Endothelial cell of umbilical vein (primary cell): ENCODE measurements at regions of chr1 and their contacts with region 1.

Region 1: GRCh38 chr1:178749581-178750166 is 24.6 kb downstream of the RALGPS2 start:
- DNase-seq: no peak
- H3K4me3 ChIP-seq: no peak overlapping the region
- H3K27ac ChIP-seq: no peak overlapping the region
- H3K4me1 ChIP-seq: no peaks in the 10 kb centered on the region
- H3K27me3 ChIP-seq: no peaks in the 10 kb centered on the region
- CTCF ChIP-seq: no peak
- POLR2A ChIP-seq: no peak

Region 2: DNA sequence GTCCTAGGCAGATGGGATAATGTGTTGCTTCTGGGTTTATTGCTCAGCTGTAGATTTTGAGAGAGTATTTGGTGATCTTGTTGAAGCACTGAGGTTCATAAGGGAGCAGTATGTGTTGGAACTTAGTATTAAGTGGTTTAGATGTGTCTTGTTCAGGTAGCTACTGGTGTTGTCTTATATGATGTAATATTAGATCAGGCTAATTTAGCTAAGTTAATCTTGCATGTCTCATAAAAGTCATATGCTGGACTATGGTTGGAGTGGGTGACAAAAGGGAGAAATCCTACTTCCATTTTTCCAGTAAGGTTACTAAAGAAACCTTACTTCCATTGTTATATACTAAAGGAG is 449.3 kb before region 1 on chr1:
- CTCF ChIA-PET with region 1: interaction called, 10 read pairs
- POLR2A ChIA-PET with region 1: no interaction called
- dilution Hi-C with region 1: no loop called
- intact Hi-C with region 1: no loop called
- DNase-seq: no peak
- H3K4me3 ChIP-seq: no peak overlapping the region
- H3K27ac ChIP-seq: no peak overlapping the region
- H3K4me1 ChIP-seq: peaks cover 10% of the 10 kb centered on the region
- H3K27me3 ChIP-seq: no peaks in the 10 kb centered on the region
- CTCF ChIP-seq: no peak
- POLR2A ChIP-seq: no peak

Region 3: DNA sequence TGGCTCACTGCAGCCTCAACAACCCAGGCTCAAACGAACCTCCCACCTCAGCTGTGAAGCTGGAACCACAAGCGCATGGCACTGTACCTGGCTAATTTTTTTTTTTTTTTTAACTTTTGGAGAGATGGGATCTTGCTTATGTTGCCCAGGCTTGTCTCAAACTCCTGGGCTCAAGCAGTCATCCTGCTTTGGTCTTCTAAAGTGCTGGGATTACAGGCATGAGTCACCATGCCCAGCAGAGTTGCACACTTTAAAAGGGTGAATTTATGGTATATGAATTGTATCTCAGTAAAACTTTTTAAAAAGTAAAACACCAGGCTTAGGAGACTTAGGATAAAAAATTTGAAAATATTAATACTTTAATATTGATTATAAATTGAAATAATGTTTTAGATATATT is 352.0 kb before region 1 on chr1:
- CTCF ChIA-PET with region 1: no interaction called
- POLR2A ChIA-PET with region 1: no interaction called
- dilution Hi-C with region 1: no loop called
- intact Hi-C with region 1: no loop called
- DNase-seq: no peak
- H3K4me3 ChIP-seq: no peak overlapping the region
- H3K27ac ChIP-seq: no peak overlapping the region
- H3K4me1 ChIP-seq: no peaks in the 10 kb centered on the region
- H3K27me3 ChIP-seq: no peaks in the 10 kb centered on the region
- CTCF ChIP-seq: no peak
- POLR2A ChIP-seq: no peak

Region 4: DNA sequence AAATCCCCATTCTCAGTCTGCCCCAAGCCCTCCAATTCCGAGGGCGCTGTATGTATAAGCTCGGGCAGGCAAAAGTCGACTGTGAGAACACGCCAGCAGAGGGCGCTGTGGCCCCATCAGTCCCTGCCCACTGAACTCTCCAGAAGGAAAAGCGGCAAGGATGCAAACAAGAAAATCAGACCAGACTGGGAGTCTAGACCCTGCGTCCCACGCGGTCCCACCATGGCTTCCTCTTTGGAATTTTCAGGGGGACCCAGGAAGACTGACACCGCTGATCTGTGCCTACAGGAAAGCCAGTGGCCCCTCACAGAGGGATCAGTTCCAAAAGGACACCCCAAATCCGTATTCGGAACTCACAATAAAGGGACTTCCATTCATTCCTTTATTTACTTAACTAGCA is 217.3 kb before region 1 on chr1:
- CTCF ChIA-PET with region 1: interaction called, 60 read pairs
- POLR2A ChIA-PET with region 1: interaction called, 3 read pairs
- dilution Hi-C with region 1: no loop called
- intact Hi-C with region 1: loop called (anchors 2 kb)
- DNase-seq: peak; percentile 82
- H3K4me3 ChIP-seq: no peak overlapping the region
- H3K27ac ChIP-seq: no peak overlapping the region
- H3K4me1 ChIP-seq: no peaks in the 10 kb centered on the region
- H3K27me3 ChIP-seq: no peaks in the 10 kb centered on the region
- CTCF ChIP-seq: peak; percentile 87 to 89
- POLR2A ChIP-seq: no peak

Region 5: GRCh38 chr1:178552856-178553255 is 196.8 kb before region 1 on chr1:
- CTCF ChIA-PET with region 1: interaction called, 325 read pairs
- POLR2A ChIA-PET with region 1: no interaction called
- dilution Hi-C with region 1: no loop called
- intact Hi-C with region 1: no loop called
- DNase-seq: no peak
- H3K4me3 ChIP-seq: no peak overlapping the region
- H3K27ac ChIP-seq: no peak overlapping the region
- H3K4me1 ChIP-seq: no peaks in the 10 kb centered on the region
- H3K27me3 ChIP-seq: no peaks in the 10 kb centered on the region
- CTCF ChIP-seq: no peak
- POLR2A ChIP-seq: no peak

Region 6: GRCh38 chr1:178612261-178612660 is 137.4 kb before region 1 on chr1:
- CTCF ChIA-PET with region 1: interaction called, 12 read pairs
- POLR2A ChIA-PET with region 1: interaction called, 4 read pairs
- dilution Hi-C with region 1: no loop called
- intact Hi-C with region 1: no loop called
- DNase-seq: peak; percentile 50
- H3K4me3 ChIP-seq: no peak overlapping the region
- H3K27ac ChIP-seq: peak overlapping the region; percentile 53
- H3K4me1 ChIP-seq: peaks cover 11% of the 10 kb centered on the region
- H3K27me3 ChIP-seq: no peaks in the 10 kb centered on the region
- CTCF ChIP-seq: no peak
- POLR2A ChIP-seq: no peak

Region 7: DNA sequence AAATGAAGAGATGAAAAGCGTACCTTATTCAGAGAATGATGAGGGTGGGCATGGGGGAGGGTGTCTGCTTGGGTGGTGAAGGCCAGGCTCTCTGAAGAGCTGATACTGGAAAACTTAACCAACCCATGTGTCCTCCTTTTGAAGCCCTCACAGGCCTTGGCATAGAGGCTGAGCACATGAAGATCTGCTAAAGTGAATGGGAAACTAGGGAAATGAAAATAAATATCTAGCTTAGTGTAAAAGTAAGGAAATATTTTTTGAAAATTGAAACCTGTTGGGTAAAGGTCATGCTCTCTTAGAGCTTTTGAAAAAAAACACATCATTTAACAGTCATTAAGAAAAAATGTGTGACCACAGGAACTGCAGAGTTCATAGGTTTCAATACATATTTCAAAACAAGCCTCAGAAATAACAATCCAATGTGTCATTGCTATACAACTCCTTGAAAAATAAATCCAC is 65.1 kb before region 1 on chr1:
- CTCF ChIA-PET with region 1: interaction called, 26 read pairs
- POLR2A ChIA-PET with region 1: no interaction called
- dilution Hi-C with region 1: no loop called
- intact Hi-C with region 1: no loop called
- DNase-seq: peak; percentile 93
- H3K4me3 ChIP-seq: no peak overlapping the region
- H3K27ac ChIP-seq: peak overlapping the region; percentile 98
- H3K4me1 ChIP-seq: peaks cover 43% of the 10 kb centered on the region
- H3K27me3 ChIP-seq: no peaks in the 10 kb centered on the region
- CTCF ChIP-seq: no peak
- POLR2A ChIP-seq: peak; percentile 47

Region 8: DNA sequence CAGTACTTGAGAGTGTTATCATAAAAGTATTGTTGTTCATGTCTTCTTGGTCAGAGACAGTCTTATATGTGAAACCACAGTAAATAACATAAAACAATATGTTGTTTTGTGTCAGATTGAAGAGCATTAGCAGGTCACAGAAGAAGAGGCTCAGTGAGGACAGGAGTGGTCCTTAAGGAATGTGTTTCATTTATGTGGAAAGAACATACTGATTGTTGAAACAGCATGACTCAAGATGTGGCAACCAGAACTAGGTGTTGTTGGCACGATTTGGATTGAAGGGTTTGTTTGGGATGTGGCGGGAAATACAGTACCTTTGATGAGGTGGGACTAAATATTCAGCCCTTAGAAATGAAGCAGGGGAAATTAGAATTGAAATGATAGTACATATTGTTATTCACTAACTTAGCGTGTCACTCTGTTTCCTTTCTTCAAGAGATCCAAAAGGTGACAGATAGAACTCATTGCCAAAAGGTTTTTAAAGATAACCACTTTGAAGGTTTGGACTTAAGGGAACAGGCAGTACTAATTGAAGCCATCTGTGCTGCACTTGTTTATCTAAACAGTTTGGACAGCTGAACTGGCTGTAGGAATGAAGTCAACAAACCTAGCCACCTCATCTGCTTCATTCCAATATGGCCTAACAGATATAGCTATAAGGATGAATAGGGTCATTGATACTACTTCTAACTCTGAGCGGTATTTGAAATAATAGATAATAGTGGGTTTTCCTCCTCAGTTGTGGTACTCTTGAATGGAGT is 10.2 kb before region 1 on chr1:
- CTCF ChIA-PET with region 1: interaction called, 15 read pairs
- POLR2A ChIA-PET with region 1: no interaction called
- dilution Hi-C with region 1: no loop called
- intact Hi-C with region 1: no loop called
- DNase-seq: no peak
- H3K4me3 ChIP-seq: no peak overlapping the region
- H3K27ac ChIP-seq: no peak overlapping the region
- H3K4me1 ChIP-seq: peaks cover 3% of the 10 kb centered on the region
- H3K27me3 ChIP-seq: no peaks in the 10 kb centered on the region
- CTCF ChIP-seq: no peak
- POLR2A ChIP-seq: no peak